ENCODE measurements at regions of chr2 and their contacts with region 1.

Region 1: GRCh38 chr2:96760036-96760985 is at the start of gene CNNM4:
- DNase-seq: peak; percentile 94
- ATAC-seq: peak; percentile 97
- H3K4me3 Mint-ChIP-seq: peak within 1 kb of the TSS; percentile 77
- H3K27ac Mint-ChIP-seq: peak within 1 kb of the TSS; percentile 83
- H3K4me1 Mint-ChIP-seq: peaks cover 48% of the 10 kb centered on the region
- H3K27me3 Mint-ChIP-seq: no peaks in the 10 kb centered on the region
- total RNA-seq, gene CNNM4: 7.6 to 7.9 TPM

Region 2: GRCh38 chr2:96594691-96595152 is 165.6 kb before region 1 on chr2:
- CTCF ChIA-PET with region 1: interaction called, 24 read pairs
- DNase-seq: peak; percentile 74
- ATAC-seq: peak; percentile 92
- H3K4me3 Mint-ChIP-seq: peak overlapping the region; percentile 15
- H3K27ac Mint-ChIP-seq: peak overlapping the region; percentile 94
- H3K4me1 Mint-ChIP-seq: peaks cover 63% of the 10 kb centered on the region
- H3K27me3 Mint-ChIP-seq: no peaks in the 10 kb centered on the region

Region 3: DNA sequence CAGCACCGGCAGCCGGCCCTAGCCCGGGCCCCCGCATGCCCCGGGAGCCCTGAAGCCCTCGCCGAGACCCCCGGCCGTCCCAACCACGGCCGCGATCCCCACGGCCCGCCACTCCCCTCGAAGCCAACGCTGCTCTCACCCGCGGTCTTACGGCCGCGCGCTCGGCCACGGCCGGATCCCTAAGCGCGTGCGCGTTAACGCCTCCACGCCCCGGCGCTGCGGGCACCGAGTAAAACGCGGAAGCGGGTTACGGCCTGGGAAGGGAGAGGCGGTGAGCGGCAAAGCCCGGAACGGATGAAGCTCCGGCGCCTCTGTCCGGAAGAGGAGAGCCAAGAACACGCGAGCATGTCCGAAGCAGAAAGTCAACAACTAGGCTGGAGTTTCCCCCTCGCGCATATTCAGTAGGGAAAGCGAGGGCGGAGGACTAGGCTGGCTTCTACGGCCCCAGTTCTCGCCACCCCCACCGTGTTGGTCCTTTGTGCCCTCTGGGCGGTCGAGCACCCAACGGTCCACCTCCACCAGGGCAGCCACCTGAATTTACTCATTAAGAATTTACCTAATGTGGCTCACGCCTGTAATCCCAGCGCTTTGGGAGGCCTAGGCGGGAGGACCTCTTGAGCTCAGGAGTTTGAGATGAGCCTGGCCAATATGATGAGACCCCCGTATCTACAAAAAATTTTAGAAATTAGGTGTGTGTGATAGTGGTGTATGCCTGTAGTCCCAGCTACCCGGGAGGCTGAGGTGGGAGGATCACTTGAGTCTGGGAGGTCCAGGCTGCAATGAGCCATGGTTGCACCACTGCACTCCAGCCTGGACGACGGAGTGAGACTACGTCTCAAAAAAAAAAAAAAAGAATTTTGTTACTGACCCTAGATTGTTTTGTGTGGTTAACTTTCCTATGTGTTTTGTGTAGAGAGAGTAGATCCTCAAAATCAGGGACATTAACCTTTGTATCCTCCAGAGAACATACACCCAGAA is 121.9 kb before region 1 on chr2 and contains the start of gene KANSL3:
- CTCF ChIA-PET with region 1: interaction called, 15 read pairs
- DNase-seq: peak; percentile 93
- ATAC-seq: peak; percentile 84
- H3K4me3 Mint-ChIP-seq: peak within 1 kb of the TSS; percentile 80
- H3K27ac Mint-ChIP-seq: peak within 1 kb of the TSS; percentile 94
- H3K4me1 Mint-ChIP-seq: peaks cover 41% of the 10 kb centered on the region
- H3K27me3 Mint-ChIP-seq: peaks cover 11% of the 10 kb centered on the region
- total RNA-seq, gene KANSL3: 74.6 to 84.0 TPM

Region 4: GRCh38 chr2:96773922-96774321 is 13.6 kb after region 1 on chr2:
- CTCF ChIA-PET with region 1: interaction called, 121 read pairs
- DNase-seq: peak; percentile 75
- ATAC-seq: peak; percentile 73
- H3K4me3 Mint-ChIP-seq: peak overlapping the region; percentile 58
- H3K27ac Mint-ChIP-seq: peak overlapping the region; percentile 89
- H3K4me1 Mint-ChIP-seq: peaks cover 28% of the 10 kb centered on the region
- H3K27me3 Mint-ChIP-seq: no peaks in the 10 kb centered on the region

Region 5: DNA sequence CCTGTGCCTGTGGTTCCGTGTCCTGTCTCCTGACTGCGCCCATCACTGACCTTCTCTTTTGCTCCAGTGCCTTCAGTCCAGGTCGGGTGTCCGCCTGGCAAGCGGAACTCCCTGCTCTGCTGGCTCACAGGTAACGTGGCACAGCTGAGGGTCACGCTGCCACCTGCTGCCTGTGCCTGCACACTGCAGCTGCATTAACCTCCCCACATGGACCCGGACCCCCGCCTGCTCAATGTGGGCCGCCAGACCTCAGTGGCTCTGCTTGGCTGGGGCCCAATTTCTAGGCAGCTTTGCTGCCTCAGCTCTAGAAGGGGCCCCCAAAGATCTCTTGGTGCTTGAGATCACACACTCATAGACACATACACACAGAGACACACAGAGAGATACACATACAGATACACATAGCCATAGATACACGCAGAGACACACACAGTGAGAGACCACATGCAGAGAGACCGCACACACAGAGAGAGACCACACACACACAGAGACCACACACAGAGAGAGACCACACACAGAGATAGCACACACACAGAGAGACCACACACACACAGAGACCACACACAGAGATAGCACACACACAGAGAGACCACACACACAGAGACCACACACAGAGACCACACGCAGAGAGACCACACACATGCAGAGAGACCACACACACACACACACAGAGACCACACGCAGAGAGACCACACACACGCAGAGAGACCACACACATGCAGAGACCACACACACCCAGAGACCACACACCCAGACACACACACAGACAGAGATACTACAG is 40.9 kb after region 1 on chr2:
- CTCF ChIA-PET with region 1: interaction called, 15 read pairs
- DNase-seq: peak; percentile 83
- ATAC-seq: peak; percentile 92
- H3K4me3 Mint-ChIP-seq: no peak overlapping the region
- H3K27ac Mint-ChIP-seq: no peak overlapping the region
- H3K4me1 Mint-ChIP-seq: peaks cover 4% of the 10 kb centered on the region
- H3K27me3 Mint-ChIP-seq: no peaks in the 10 kb centered on the region

Measured in activated CD8-positive, alpha-beta memory T cell treated with anti-CD3 and anti-CD28 coated beads, Interleukin-2, amount 10 ng/mL, durations not matched to agents 7 days and 5 days (primary cell).